ENCODE measurements at regions of chr2 and their contacts with region 1.

Region 1: GRCh38 chr2:122451040-122451439 is 695.6 kb downstream of the TSN start:
- DNase-seq: peak; percentile 58
- H3K4me3 Mint-ChIP-seq: no peak overlapping the region
- H3K27ac Mint-ChIP-seq: no peak overlapping the region
- H3K4me1 Mint-ChIP-seq: no peaks in the 10 kb centered on the region
- H3K27me3 Mint-ChIP-seq: no peaks in the 10 kb centered on the region

Region 2: DNA sequence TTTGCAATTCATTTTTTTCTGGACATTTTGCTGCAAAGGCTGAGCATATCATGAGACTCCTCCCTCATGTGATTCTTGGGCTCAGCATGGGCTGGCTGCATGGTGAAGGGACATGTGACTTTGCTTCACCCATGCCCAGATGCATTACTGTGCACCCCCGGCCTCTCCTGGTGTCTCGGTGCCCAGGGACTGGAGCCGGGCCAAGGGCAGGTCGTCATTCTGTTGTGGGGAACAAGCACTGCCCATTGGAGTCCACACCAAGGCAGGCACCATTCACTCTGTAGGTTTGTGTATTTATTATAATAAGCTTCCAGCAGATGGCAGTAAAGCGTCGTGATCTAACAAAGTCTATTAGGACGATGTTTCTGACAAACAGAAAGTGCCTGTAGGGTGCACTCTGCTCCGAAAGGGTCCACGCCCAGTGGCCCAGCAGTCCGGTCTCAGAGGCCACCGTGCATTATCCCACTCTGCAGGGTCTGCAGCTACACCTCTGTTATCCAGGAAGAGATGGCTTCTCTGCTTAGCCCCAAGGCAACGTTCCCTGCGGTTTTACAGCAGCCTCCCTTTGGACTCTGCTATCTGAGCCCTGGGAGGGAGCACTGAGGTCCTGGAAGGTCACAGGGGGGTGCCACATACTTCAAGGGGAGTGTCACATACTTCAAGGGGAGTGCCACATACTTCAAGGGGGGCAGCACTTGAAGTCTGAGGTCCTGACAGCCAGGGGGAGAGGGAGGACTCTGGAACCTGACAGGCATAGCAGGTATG is 476.0 kb before region 1 on chr2:
- intact Hi-C with region 1: loop called (anchors 2 kb)
- DNase-seq: peak; percentile 84
- H3K4me3 Mint-ChIP-seq: peak overlapping the region; percentile 61
- H3K27ac Mint-ChIP-seq: no peak overlapping the region
- H3K4me1 Mint-ChIP-seq: no peaks in the 10 kb centered on the region
- H3K27me3 Mint-ChIP-seq: peaks cover 2% of the 10 kb centered on the region

Region 3: DNA sequence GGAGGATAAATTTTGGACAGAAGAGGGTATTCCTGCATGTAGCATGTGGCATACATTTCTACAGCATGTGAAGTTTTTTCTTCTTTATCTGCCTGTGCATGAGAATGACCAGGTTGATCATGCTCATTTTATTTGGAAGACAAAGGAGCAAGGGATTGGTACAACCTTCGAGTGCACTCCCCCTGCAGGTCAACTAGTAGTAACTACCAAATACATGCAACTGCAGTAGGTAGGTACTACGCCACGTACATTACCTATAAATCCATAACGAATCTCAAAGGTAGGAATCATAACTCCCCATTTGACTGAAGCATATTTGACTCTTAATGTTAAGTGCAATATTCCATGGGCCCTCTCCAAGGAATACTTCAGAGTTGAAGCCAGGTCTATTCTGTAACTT is 68.3 kb after region 1 on chr2:
- intact Hi-C with region 1: no loop called
- DNase-seq: no peak
- H3K4me3 Mint-ChIP-seq: no peak overlapping the region
- H3K27ac Mint-ChIP-seq: no peak overlapping the region
- H3K4me1 Mint-ChIP-seq: no peaks in the 10 kb centered on the region
- H3K27me3 Mint-ChIP-seq: no peaks in the 10 kb centered on the region